CD8-positive, alpha-beta T cell (primary cell): ENCODE measurements at regions of chr3 and their contacts with region 1.

Region 1: GRCh38 chr3:158801696-158802408 is at the start of gene MFSD1:
- DNase-seq: peak; percentile 60 to 94 (median 88)
- ATAC-seq: peak; percentile 90
- H3K4me3 ChIP-seq: peak within 1 kb of the TSS; percentile 88 to 100
- H3K4me3 Mint-ChIP-seq: peak within 1 kb of the TSS; percentile 90
- H3K27ac ChIP-seq: peak within 1 kb of the TSS; percentile 71 to 79
- H3K27ac Mint-ChIP-seq: peak within 1 kb of the TSS; percentile 91
- H3K4me1 ChIP-seq: peaks cover 27% of the 10 kb centered on the region
- H3K4me1 Mint-ChIP-seq: peaks cover 35% of the 10 kb centered on the region
- H3K27me3 ChIP-seq: no peaks in the 10 kb centered on the region
- H3K27me3 Mint-ChIP-seq: no peaks in the 10 kb centered on the region
- CTCF ChIP-seq: no peak
- total RNA-seq, gene MFSD1: 5.3 to 6.3 TPM

Region 2: GRCh38 chr3:158103081-158103886 is 698.6 kb before region 1 on chr3:
- CTCF ChIA-PET with region 1: no interaction called
- POLR2A ChIA-PET with region 1: no interaction called
- intact Hi-C with region 1: loop called in 1 of 2 experiments (anchors 5 kb)
- DNase-seq: peak in 2 of 9 experiments; percentile 31 to 53
- ATAC-seq: no peak
- H3K4me3 ChIP-seq: no peak overlapping the region
- H3K4me3 Mint-ChIP-seq: peak overlapping the region; percentile 29
- H3K27ac ChIP-seq: no peak overlapping the region
- H3K27ac Mint-ChIP-seq: no peak overlapping the region
- H3K4me1 ChIP-seq: peaks cover 34% of the 10 kb centered on the region
- H3K4me1 Mint-ChIP-seq: peaks cover 38% of the 10 kb centered on the region
- H3K27me3 ChIP-seq: peaks cover 81 to 94% of the 10 kb centered on the region in 2 experiments
- H3K27me3 Mint-ChIP-seq: peaks cover 89% of the 10 kb centered on the region
- CTCF ChIP-seq: no peak

Region 3: GRCh38 chr3:158644345-158644908 is 157.4 kb before region 1 on chr3 and contains the start of gene GFM1:
- CTCF ChIA-PET with region 1: interaction called, 6 read pairs
- POLR2A ChIA-PET with region 1: interaction called, 13 read pairs
- intact Hi-C with region 1: loop called (anchors 5 kb)
- DNase-seq: peak; percentile 79 to 97 (median 88)
- ATAC-seq: peak; percentile 93
- H3K4me3 ChIP-seq: peak within 1 kb of the TSS; percentile 74 to 92
- H3K4me3 Mint-ChIP-seq: peak within 1 kb of the TSS; percentile 97
- H3K27ac ChIP-seq: peak within 1 kb of the TSS; percentile 70 to 80
- H3K27ac Mint-ChIP-seq: peak within 1 kb of the TSS; percentile 93
- H3K4me1 ChIP-seq: peaks cover 12% of the 10 kb centered on the region
- H3K4me1 Mint-ChIP-seq: peaks cover 49% of the 10 kb centered on the region
- H3K27me3 ChIP-seq: no peaks in the 10 kb centered on the region
- H3K27me3 Mint-ChIP-seq: no peaks in the 10 kb centered on the region
- CTCF ChIP-seq: peak; percentile 90
- total RNA-seq, gene GFM1: 34.7 to 38.7 TPM

Region 4: DNA sequence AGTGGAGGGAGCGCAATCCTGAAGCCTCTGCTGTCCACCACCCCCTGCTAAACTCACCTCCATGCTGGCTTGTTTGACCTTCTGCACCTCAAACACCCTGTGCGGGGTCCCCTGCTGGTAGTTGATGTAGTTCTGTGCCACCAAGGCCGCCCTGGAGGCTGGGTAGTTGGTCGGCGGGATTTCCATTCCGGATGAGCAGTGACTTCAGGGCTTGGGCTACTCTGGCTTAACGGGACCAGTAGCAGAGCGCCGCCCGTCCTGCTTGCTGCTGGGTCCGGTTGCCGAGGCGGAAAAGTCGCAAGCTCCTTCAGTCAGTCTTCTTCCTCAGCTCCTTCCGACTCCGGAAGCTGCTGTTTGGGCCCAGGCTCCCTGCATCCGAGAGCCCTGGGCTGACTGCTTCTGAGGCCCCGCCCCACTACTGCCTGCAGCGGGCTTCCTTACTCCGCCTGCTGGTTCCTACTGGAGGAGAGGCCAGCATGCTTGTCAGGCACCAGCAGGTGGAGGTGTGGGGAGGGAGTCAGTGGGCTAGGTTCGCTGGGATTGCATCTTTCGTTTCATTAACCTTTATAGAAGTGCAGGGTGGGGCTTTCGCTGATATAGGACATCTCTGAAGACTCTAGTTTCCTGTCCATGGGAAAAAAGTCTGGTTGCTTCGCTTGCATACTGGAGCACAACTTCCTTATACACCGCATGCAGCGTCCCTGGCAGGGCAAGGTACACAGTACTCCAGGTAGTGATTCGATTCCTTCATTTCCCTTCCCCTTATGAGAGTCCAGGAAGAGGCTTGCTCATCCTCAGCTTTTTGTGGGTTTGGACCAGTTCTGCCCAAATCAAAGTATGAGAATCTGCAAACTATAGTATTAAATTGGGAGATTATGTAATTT is 129.3 kb before region 1 on chr3 and contains the start of gene LXN:
- CTCF ChIA-PET with region 1: no interaction called
- POLR2A ChIA-PET with region 1: no interaction called
- intact Hi-C with region 1: loop called (anchors 1 to 5 kb)
- DNase-seq: peak; percentile 43 to 88 (median 77)
- ATAC-seq: peak; percentile 99
- H3K4me3 ChIP-seq: peak within 1 kb of the TSS; percentile 54 to 61
- H3K4me3 Mint-ChIP-seq: peak within 1 kb of the TSS; percentile 93
- H3K27ac ChIP-seq: peak within 1 kb of the TSS; percentile 30 to 39
- H3K27ac Mint-ChIP-seq: peak within 1 kb of the TSS; percentile 90
- H3K4me1 ChIP-seq: peaks cover 8% of the 10 kb centered on the region
- H3K4me1 Mint-ChIP-seq: peaks cover 29% of the 10 kb centered on the region
- H3K27me3 ChIP-seq: no peaks in the 10 kb centered on the region
- H3K27me3 Mint-ChIP-seq: no peaks in the 10 kb centered on the region
- CTCF ChIP-seq: peak; percentile 57
- total RNA-seq, gene LXN: 1.00 to 1.1 TPM

Region 5: DNA sequence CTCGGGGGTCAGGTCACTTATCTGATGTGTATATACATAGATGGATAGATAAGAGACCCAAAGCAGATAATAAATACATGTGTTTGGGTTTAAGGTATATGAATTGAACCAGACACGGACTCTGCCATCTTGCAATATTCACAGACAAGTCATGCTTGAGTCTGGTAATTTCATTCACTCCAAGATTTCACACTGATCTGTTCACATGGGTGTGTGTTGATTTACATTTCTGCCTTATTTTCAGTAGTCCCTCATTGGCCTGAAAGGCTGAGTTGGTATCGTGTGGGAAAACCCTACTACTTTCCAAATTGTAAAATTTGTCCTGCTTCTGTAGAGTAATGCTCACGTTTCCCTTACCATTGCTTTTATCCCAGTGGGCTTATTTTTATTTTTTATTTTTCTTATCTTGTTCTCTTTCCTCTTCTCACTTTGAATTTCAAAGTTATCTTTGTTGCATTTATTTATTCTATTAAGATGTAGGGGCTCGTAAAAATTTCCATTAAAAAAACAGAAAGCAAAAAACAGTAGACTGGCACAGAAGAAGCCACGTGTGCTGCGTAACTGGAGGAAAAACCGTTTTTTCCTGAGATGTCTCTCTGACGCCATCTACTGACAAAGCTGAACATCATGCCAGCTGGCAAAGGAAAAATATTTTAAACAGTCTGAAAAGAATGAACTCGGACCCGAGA is 10.8 kb before region 1 on chr3:
- CTCF ChIA-PET with region 1: interaction called, 23 read pairs
- POLR2A ChIA-PET with region 1: interaction called, 10 read pairs
- intact Hi-C with region 1: loop called in 1 of 2 experiments (anchors 1 kb)
- DNase-seq: peak in 4 of 9 experiments; percentile 17 to 75 (median 44)
- ATAC-seq: peak; percentile 65
- H3K4me3 ChIP-seq: no peak overlapping the region
- H3K4me3 Mint-ChIP-seq: no peak overlapping the region
- H3K27ac ChIP-seq: no peak overlapping the region
- H3K27ac Mint-ChIP-seq: no peak overlapping the region
- H3K4me1 ChIP-seq: peaks cover 3% of the 10 kb centered on the region
- H3K4me1 Mint-ChIP-seq: peaks cover 3% of the 10 kb centered on the region
- H3K27me3 ChIP-seq: no peaks in the 10 kb centered on the region
- H3K27me3 Mint-ChIP-seq: no peaks in the 10 kb centered on the region
- CTCF ChIP-seq: peak; percentile 85

Region 6: DNA sequence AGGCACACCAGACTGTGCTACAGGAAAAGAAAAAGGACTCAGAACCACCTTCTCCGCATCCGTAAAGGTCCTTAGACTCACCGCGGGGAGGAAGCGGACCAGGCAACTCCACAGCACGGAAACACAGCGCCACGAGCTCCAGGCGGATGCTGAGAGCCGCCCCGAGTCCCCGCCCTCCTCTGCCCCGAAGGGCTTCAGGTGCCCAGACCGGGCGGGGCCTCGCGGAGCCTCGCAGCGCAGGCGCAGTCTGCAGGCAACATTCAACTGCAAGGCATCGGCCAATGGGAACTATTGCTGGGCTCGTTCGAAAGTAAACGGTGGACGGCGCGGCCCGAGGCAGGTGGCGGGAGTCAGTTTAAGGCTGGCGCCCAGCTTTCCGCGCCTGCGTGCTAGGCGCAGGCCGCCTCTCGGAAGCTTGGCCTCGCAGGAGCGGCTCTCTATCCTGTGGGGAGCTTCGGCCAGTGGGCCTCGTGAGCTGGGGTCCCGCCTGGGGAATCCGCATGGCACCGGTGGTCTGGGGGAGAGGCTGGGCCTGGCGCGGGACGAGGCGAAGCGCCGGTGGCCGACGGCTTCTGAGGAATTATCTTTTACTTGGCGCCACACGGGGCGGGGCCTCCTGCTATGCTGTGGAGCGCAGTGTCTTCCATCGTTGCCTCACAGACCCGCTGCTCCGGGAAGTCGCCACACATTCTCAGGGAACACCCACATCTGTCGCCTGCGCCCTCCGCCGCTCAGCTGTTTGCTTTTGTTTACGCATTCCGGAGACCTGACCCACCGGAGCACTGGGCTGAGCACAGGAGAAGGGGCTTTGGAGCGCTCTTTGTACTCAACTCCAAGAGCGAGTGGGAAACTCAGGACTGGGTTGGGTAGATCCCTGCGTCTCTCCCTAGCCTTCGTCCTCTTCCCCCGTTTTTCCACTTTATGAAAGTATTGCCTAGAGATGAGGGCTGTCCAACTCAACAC is 1648.1 kb after region 1 on chr3 and contains the start of gene TRIM59:
- CTCF ChIA-PET with region 1: no interaction called
- POLR2A ChIA-PET with region 1: no interaction called
- intact Hi-C with region 1: loop called in 1 of 2 experiments (anchors 1 kb)
- DNase-seq: peak; percentile 92 to 99 (median 95)
- ATAC-seq: peak; percentile 96
- H3K4me3 ChIP-seq: peak within 1 kb of the TSS; percentile 80 to 91
- H3K4me3 Mint-ChIP-seq: peak within 1 kb of the TSS; percentile 95
- H3K27ac ChIP-seq: peak within 1 kb of the TSS; percentile 60 to 85
- H3K27ac Mint-ChIP-seq: peak within 1 kb of the TSS; percentile 93
- H3K4me1 ChIP-seq: peaks cover 22% of the 10 kb centered on the region
- H3K4me1 Mint-ChIP-seq: peaks cover 38% of the 10 kb centered on the region
- H3K27me3 ChIP-seq: no peaks in the 10 kb centered on the region
- H3K27me3 Mint-ChIP-seq: no peaks in the 10 kb centered on the region
- CTCF ChIP-seq: no peak
- total RNA-seq, gene TRIM59: 15.0 to 15.5 TPM

Region 7: GRCh38 chr3:160754855-160755747 is 1953.2 kb after region 1 on chr3:
- CTCF ChIA-PET with region 1: no interaction called
- POLR2A ChIA-PET with region 1: no interaction called
- intact Hi-C with region 1: loop called in 1 of 2 experiments (anchors 5 kb)
- DNase-seq: peak; percentile 79 to 95 (median 89)
- ATAC-seq: peak; percentile 85
- H3K4me3 ChIP-seq: peak overlapping the region; percentile 79 to 90
- H3K4me3 Mint-ChIP-seq: peak overlapping the region; percentile 90
- H3K27ac ChIP-seq: peak overlapping the region; percentile 66 to 84
- H3K27ac Mint-ChIP-seq: peak overlapping the region; percentile 75
- H3K4me1 ChIP-seq: peaks cover 26% of the 10 kb centered on the region
- H3K4me1 Mint-ChIP-seq: peaks cover 33% of the 10 kb centered on the region
- H3K27me3 ChIP-seq: no peaks in the 10 kb centered on the region
- H3K27me3 Mint-ChIP-seq: peaks cover 13% of the 10 kb centered on the region
- CTCF ChIP-seq: no peak